Caco-2 (cell line): ENCODE measurements at regions of chr14 and their contacts with region 1.

Region 1: DNA sequence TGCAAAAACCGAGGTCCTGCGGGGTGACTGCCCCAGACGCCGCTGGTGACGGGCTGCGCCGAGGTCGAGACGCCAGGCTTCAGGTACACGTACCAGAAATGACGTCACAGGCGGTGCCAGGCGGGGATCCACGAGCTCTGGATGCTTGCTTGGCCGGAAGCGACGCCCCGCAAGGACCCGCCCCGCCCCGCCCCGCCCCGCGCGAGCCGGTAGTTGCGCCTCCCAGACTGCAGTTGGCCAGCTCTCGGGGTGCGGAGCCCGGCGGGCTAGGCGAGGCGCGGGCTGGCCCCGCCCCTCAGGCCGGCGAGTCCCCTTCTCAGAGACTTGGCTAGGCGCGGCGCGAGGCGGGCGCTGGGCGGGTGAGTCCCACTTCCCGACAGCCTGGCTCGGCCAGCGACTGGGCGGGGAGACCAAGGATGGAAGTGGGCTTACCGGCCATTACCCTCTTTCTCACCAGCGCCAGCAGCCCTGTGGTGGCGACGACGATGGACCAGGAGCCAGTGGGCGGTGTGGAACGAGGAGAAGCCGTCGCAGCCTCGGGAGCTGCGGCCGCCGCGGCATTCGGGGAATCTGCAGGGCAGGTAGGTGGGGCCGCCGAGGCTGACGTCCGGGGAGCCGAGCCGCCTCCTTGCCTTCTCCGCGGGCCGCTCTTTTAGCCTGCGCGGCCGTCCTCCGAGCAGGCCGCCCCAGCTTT is at the start of gene FAM177A1:
- DNase-seq: peak; percentile 97 to 99
- H3K4me3 ChIP-seq: peak within 1 kb of the TSS; percentile 93
- H3K4me3 Mint-ChIP-seq: peak within 1 kb of the TSS; percentile 90
- H3K27ac Mint-ChIP-seq: peak within 1 kb of the TSS; percentile 98
- H3K4me1 ChIP-seq: peaks cover 21% of the 10 kb centered on the region
- H3K4me1 Mint-ChIP-seq: peaks cover 17% of the 10 kb centered on the region
- H3K27me3 ChIP-seq: no peaks in the 10 kb centered on the region
- H3K27me3 Mint-ChIP-seq: no peaks in the 10 kb centered on the region
- CTCF ChIP-seq: no peak
- total RNA-seq, gene FAM177A1: 73.6 and 82.0 TPM in 2 replicates

Region 2: GRCh38 chr14:35034440-35034833 is 11.8 kb before region 1 on chr14:
- CTCF ChIA-PET with region 1: no interaction called
- POLR2A ChIA-PET with region 1: interaction called, 11 read pairs
- intact Hi-C with region 1: no loop called
- DNase-seq: peak in 1 of 2 experiments; percentile 35
- H3K4me3 ChIP-seq: no peak overlapping the region
- H3K4me3 Mint-ChIP-seq: no peak overlapping the region
- H3K27ac Mint-ChIP-seq: no peak overlapping the region
- H3K4me1 ChIP-seq: no peaks in the 10 kb centered on the region
- H3K4me1 Mint-ChIP-seq: peaks cover under 1% of the 10 kb centered on the region
- H3K27me3 ChIP-seq: no peaks in the 10 kb centered on the region
- H3K27me3 Mint-ChIP-seq: no peaks in the 10 kb centered on the region
- CTCF ChIP-seq: no peak

Region 3: DNA sequence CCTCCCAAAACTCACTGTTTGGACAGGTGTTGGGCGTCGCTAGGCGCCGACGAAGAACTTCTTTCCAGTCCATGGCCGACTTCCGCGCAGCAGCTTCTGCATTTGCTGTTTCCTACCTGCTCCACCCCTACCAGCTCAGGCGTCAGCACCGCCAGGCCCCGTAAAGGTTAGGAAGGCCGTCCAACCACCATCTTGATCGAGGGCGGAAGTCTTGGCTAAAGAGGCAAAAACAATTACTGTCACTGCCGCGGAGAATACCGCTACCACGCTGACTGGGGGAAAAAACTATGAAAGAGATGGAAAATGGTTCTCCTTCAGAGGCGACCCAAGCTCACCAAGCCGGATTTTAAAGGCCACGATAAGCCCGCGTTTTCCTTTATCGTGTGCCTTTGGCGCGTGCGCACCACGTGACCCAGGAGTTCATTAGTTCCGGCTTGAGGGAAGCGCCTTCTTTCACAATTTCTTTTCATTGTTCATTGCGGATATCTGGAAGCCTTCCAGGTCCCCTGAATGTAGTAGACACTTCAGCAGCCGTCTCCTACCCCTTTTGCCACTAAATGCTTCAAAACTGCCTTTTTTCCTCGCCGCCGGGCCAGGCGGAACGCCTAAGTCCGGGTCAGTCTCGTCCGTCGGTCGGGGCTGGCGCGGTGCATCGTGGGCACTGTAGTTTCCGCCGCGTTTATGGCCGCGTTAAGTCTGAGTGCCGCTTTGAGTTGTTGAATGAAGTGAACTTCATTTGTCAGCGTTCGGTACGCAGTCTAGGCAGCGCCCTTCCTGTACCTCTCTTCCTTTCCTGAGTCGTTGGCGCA is 75.9 kb after region 1 on chr14 and contains the starts of genes PPP2R3C and PRORP:
- CTCF ChIA-PET with region 1: no interaction called
- POLR2A ChIA-PET with region 1: interaction called, 35 read pairs
- intact Hi-C with region 1: loop called (anchors 2 kb)
- DNase-seq: peak; percentile 95 to 97
- H3K4me3 ChIP-seq: peak within 1 kb of the TSS; percentile 70
- H3K4me3 Mint-ChIP-seq: peak within 1 kb of the TSS; percentile 88
- H3K27ac Mint-ChIP-seq: peak within 1 kb of the TSS; percentile 100
- H3K4me1 ChIP-seq: no peaks in the 10 kb centered on the region
- H3K4me1 Mint-ChIP-seq: peaks cover 38% of the 10 kb centered on the region
- H3K27me3 ChIP-seq: no peaks in the 10 kb centered on the region
- H3K27me3 Mint-ChIP-seq: no peaks in the 10 kb centered on the region
- CTCF ChIP-seq: no peak
- total RNA-seq, gene PPP2R3C: 23.3 and 25.2 TPM in 2 replicates
- total RNA-seq, gene PRORP: 34.5 and 36.3 TPM in 2 replicates

Region 4: GRCh38 chr14:35189422-35189821 is 143.2 kb after region 1 on chr14:
- CTCF ChIA-PET with region 1: no interaction called
- POLR2A ChIA-PET with region 1: no interaction called
- intact Hi-C with region 1: no loop called
- DNase-seq: no peak
- H3K4me3 ChIP-seq: no peak overlapping the region
- H3K4me3 Mint-ChIP-seq: no peak overlapping the region
- H3K27ac Mint-ChIP-seq: no peak overlapping the region
- H3K4me1 ChIP-seq: 0 out of 2 replicates have a peak, but pooled peaks cover 4% of the 10 kb centered on the region
- H3K4me1 Mint-ChIP-seq: no peaks in the 10 kb centered on the region
- H3K27me3 ChIP-seq: no peaks in the 10 kb centered on the region
- H3K27me3 Mint-ChIP-seq: no peaks in the 10 kb centered on the region
- CTCF ChIP-seq: no peak